ENCODE measurements at regions of chr1 and their contacts with region 1.

Region 1: GRCh38 chr1:84753516-84754385 is 63.5 kb upstream of the SSX2IP start:
- DNase-seq: peak; percentile 55
- H3K4me3 ChIP-seq: no peak overlapping the region
- H3K27ac ChIP-seq: no peak overlapping the region
- H3K4me1 ChIP-seq: peaks cover 0 to 9% (median 7%) of the 10 kb centered on the region in 4 donors
- H3K27me3 ChIP-seq: no peaks in the 10 kb centered on the region
- CTCF ChIP-seq: peak; percentile 87 to 94 (median 91)
- EP300 ChIP-seq: no peak
- POLR2A ChIP-seq: no peak

Region 2: DNA sequence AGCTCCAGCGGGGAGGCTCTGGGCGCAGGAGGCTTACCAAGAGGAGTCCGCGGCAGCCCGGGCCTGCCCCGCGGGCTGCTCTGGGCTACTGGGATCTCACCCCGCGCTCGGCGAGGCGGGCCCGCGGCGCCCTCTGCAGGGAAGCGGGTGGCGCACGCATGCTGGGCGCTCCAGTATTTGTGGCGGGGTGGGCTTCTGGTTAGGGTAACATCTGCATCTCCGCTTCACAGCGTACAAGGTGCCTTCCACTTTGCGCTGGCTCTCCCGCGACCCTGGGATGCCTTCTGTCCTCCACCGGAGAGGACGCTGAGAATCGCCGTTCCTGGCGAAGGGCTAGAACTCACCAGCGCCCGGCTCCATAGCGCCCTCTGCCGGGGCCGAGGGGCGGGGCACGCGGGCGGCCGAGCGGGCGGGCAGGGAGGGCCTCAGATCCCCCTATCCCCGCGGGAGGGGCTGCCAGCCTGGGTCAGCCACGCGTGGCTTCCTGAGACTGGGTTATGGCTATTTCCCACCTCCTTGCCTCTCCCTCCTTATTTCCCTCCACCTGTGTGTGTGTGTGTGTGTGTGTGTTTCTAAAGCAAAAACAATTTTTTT is 132.9 kb before region 1 on chr1:
- intact Hi-C with region 1: loop called (anchors 2 kb)
- DNase-seq: no peak
- H3K4me3 ChIP-seq: peak overlapping the region; percentile 58 to 82 (median 65)
- H3K27ac ChIP-seq: peak overlapping the region; percentile 67 to 83 (median 78)
- H3K4me1 ChIP-seq: peaks cover 18 to 46% (median 41%) of the 10 kb centered on the region in 4 donors
- H3K27me3 ChIP-seq: no peaks in the 10 kb centered on the region
- CTCF ChIP-seq: peak; percentile 84 to 99 (median 92)
- EP300 ChIP-seq: no peak
- POLR2A ChIP-seq: no peak

Region 3: GRCh38 chr1:84668185-84668584 is 85.6 kb before region 1 on chr1:
- intact Hi-C with region 1: loop called (anchors 2 kb)
- DNase-seq: no peak
- H3K4me3 ChIP-seq: no peak overlapping the region
- H3K27ac ChIP-seq: no peak overlapping the region
- H3K4me1 ChIP-seq: no peaks in the 10 kb centered on the region
- H3K27me3 ChIP-seq: no peaks in the 10 kb centered on the region
- CTCF ChIP-seq: peak; percentile 27 to 50 (median 45)
- EP300 ChIP-seq: no peak
- POLR2A ChIP-seq: no peak

Region 4: DNA sequence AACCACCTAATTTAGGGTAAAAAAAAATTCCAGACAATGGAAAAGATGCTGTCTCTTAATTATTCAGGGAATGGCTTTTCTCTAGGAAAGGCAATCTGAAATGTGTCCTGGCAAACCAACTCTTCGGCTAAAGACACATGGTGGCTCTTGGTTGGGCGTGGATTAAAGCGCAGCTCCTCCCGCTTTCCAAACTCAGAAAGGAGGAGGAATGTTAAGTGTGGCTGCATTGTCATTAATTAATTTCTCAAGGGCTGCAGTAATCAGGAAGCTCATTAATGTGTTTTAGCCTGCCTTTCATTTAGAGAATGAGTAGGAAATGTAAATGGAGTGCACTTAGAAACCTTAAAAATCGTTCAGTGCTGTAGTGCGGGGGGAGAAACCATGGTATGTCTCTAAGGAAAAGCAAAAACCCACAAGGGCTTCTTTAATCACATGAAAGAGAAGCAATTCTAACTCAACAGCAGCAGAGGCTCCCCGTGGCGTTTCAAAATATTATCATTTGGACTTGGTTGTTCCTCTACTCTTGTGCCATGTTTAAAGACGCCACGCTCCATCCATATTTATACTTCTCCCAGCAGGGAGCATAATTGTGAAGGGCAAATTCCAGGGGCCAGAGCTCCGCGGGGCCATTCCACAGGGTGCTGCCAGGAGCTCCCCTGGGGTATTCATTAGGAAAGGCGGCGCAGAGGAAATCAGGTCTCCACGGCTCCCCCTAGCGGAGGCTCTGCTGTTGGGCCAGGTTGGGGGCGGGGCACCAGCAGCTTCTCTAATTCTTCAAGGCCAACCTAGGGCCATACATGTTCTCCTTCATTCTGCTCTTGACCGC is 28.4 kb after region 1 on chr1:
- intact Hi-C with region 1: no loop called
- DNase-seq: no peak
- H3K4me3 ChIP-seq: no peak overlapping the region
- H3K27ac ChIP-seq: no peak overlapping the region
- H3K4me1 ChIP-seq: peaks cover 0 to 15% (median 14%) of the 10 kb centered on the region in 4 donors
- H3K27me3 ChIP-seq: no peaks in the 10 kb centered on the region
- CTCF ChIP-seq: peak in 2 of 3 experiments; percentile 30 to 48
- EP300 ChIP-seq: no peak
- POLR2A ChIP-seq: no peak

Measured in esophagus muscularis mucosa (tissue), 4 donors.